Gastrocnemius medialis (tissue), 4 donors: ENCODE measurements at regions of chr20 and their contacts with region 1.

Region 1: GRCh38 chr20:41232973-41233926 is 84.3 kb downstream of the ZHX3 start:
- DNase-seq: no peak
- ATAC-seq: peak; percentile 54 to 72
- H3K4me3 ChIP-seq: peak overlapping the region in 3 of 4 donors; percentile 20 to 39 (median 28)
- H3K27ac ChIP-seq: peak overlapping the region; percentile 78 to 91 (median 86)
- H3K4me1 ChIP-seq: peaks cover 65% of the 10 kb centered on the region in 2 donors
- H3K27me3 ChIP-seq: no peaks in the 10 kb centered on the region
- CTCF ChIP-seq: no peak
- POLR2A ChIP-seq: no peak

Region 2: DNA sequence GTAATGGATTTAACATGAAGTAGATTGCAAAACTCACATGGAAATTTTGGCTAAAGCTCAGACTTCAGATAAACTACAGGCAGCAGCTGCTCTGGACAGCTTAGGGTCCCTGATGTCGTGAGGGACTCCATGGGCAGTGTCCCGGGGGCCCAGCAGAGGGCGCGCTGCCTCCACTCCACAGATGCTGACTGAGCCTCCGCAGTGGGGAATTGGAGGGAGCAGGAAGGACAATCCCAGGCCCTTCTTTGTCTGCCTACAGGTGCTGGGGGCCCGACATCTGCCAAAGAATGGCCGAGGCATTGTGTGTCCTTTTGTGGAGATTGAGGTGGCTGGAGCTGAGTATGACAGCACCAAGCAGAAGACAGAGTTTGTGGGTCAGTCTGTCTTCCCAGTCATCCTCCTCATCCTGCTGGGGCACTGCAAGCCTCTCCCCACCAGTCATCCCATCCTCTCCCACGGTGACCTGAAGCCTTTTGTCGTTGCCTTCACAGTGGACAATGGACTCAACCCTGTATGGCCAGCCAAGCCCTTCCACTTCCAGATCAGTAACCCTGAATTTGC is 60.0 kb before region 1 on chr20:
- in situ Hi-C with region 1: loop called (anchors 5 to 10 kb)
- intact Hi-C with region 1: loop called (anchors 1 kb)
- DNase-seq: peak; percentile 73 to 83
- ATAC-seq: peak; percentile 85 to 88
- H3K4me3 ChIP-seq: no peak overlapping the region
- H3K27ac ChIP-seq: peak overlapping the region; percentile 68 to 80 (median 76)
- H3K4me1 ChIP-seq: peaks cover 59 to 65% of the 10 kb centered on the region in 2 donors
- H3K27me3 ChIP-seq: no peaks in the 10 kb centered on the region
- CTCF ChIP-seq: peak; percentile 96 to 98 (median 97)
- POLR2A ChIP-seq: no peak

Region 3: GRCh38 chr20:41185013-41185757 is 48.1 kb before region 1 on chr20:
- in situ Hi-C with region 1: no loop called
- intact Hi-C with region 1: loop called (anchors 2 kb)
- DNase-seq: peak; percentile 44 to 65
- ATAC-seq: peak; percentile 82 to 90
- H3K4me3 ChIP-seq: no peak overlapping the region
- H3K27ac ChIP-seq: peak overlapping the region; percentile 34 to 76 (median 59)
- H3K4me1 ChIP-seq: peaks cover 13 to 20% of the 10 kb centered on the region in 2 donors
- H3K27me3 ChIP-seq: no peaks in the 10 kb centered on the region
- CTCF ChIP-seq: peak in 4 of 5 experiments; percentile 22 to 49 (median 42)
- POLR2A ChIP-seq: no peak

Region 4: GRCh38 chr20:41213150-41213820 is 20.0 kb before region 1 on chr20:
- in situ Hi-C with region 1: no loop called
- intact Hi-C with region 1: no loop called
- DNase-seq: no peak
- ATAC-seq: peak; percentile 58 to 70
- H3K4me3 ChIP-seq: no peak overlapping the region
- H3K27ac ChIP-seq: peak overlapping the region in 2 of 4 donors; percentile 0 to 2
- H3K4me1 ChIP-seq: peaks cover 9% of the 10 kb centered on the region in 2 donors
- H3K27me3 ChIP-seq: no peaks in the 10 kb centered on the region
- CTCF ChIP-seq: no peak
- POLR2A ChIP-seq: no peak